ENCODE measurements at regions of chr15 and their contacts with region 1.

Region 1: GRCh38 chr15:99076552-99077308 is 28.1 kb upstream of the SYNM start:
- DNase-seq: peak; percentile 52 to 73
- H3K4me3 ChIP-seq: peak overlapping the region; percentile 36 to 43
- H3K27ac ChIP-seq: peak overlapping the region; percentile 14 to 59
- H3K4me1 ChIP-seq: no peaks in the 10 kb centered on the region
- H3K27me3 ChIP-seq: no peaks in the 10 kb centered on the region
- CTCF ChIP-seq: peak; percentile 79 to 90

Region 2: DNA sequence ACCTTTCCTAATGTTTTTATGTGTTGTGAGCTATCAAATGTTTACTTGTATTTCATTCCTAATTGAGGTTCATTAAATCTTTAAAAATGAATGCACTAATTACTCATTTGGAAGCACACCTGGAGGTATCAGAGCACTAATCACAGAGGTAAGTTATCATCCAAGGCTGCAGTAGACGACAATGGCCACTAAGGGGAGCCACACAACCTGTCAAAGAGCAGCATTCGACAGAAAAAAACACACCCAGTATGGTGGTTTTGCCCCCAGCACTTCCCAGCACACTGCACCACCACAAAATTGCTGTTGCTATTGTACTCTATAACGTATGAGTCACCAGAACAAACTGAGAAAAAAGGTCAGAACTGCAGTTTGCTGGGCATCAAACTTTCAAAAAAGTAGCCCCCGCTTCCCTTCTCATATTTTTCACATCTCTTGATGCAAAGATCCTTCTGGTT is 634.3 kb before region 1 on chr15:
- intact Hi-C with region 1: loop called (anchors 5 kb)
- DNase-seq: peak in 1 of 2 donors; percentile 66
- H3K4me3 ChIP-seq: no peak overlapping the region
- H3K27ac ChIP-seq: no peak overlapping the region
- H3K4me1 ChIP-seq: peaks cover 0 to 6% (median 0%) of the 10 kb centered on the region in 4 donors
- H3K27me3 ChIP-seq: peaks cover 0 to 9% of the 10 kb centered on the region in 2 donors
- CTCF ChIP-seq: peak; percentile 83 to 86

Region 3: DNA sequence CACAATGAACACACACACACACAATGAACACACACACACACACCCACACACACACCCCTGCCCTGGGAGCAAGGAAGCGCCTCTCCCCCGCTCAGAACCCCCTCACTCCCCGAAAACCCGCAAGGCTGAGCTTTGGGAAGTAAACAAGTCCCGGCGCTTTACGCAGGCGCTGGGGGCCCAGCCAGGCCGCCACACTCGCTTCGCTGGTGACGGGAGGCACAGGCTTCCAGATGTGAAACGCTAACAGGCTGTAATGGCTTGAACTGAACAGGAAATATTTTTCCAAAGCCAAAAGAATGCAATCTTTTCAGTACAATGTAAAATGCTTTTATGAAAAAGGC is 551.1 kb before region 1 on chr15:
- intact Hi-C with region 1: loop called (anchors 5 kb)
- DNase-seq: no peak
- H3K4me3 ChIP-seq: no peak overlapping the region
- H3K27ac ChIP-seq: peak overlapping the region; percentile 67 to 69
- H3K4me1 ChIP-seq: peaks cover 0 to 19% (median 12%) of the 10 kb centered on the region in 4 donors
- H3K27me3 ChIP-seq: peaks cover 0 to 3% of the 10 kb centered on the region in 2 donors
- CTCF ChIP-seq: no peak

Region 4: DNA sequence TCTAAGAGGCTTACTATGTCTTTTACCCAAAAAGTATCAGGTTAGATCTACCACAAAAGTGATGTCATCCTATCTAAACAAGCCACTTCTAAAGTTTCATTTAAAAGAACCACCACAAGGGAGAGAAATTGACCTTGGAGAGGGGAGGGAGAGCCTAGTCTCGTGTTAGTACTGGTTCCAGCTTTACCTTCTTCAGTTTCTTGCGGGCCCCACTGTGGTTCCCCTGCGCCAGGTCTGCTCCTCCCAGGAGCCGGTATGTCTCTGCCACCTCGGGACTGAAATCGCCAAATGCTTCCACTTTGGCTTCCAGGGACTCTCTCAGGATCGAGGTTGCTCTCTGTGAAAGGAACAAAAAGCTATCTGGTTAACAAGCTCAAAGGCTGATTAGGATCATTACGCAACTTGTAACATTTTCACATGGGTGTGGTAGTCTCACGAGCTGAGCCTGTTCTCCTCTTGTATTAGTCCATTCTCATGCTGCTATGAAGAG is 79.3 kb after region 1 on chr15:
- intact Hi-C with region 1: no loop called
- DNase-seq: no peak
- H3K4me3 ChIP-seq: no peak overlapping the region
- H3K27ac ChIP-seq: no peak overlapping the region
- H3K4me1 ChIP-seq: peaks cover 0 to 8% (median 0%) of the 10 kb centered on the region in 4 donors
- H3K27me3 ChIP-seq: no peaks in the 10 kb centered on the region
- CTCF ChIP-seq: no peak

Region 5: GRCh38 chr15:99224372-99225214 is 147.9 kb after region 1 on chr15:
- intact Hi-C with region 1: no loop called
- DNase-seq: no peak
- H3K4me3 ChIP-seq: no peak overlapping the region
- H3K27ac ChIP-seq: no peak overlapping the region
- H3K4me1 ChIP-seq: peaks cover 0 to 6% (median 0%) of the 10 kb centered on the region in 4 donors
- H3K27me3 ChIP-seq: no peaks in the 10 kb centered on the region
- CTCF ChIP-seq: no peak